ENCODE measurements at regions of chr15 and their contacts with region 1.

Region 1: GRCh38 chr15:71780115-71780976 is 30.0 kb upstream of the NR2E3 start:
- DNase-seq: no peak

Region 2: GRCh38 chr15:72155635-72156616 is 375.6 kb after region 1 on chr15:
- intact Hi-C with region 1: loop called (anchors 1 kb)
- DNase-seq: peak; percentile 78 to 97 (median 91)